ENCODE measurements at regions of chr11 and their contacts with region 1.

Region 1: GRCh38 chr11:47176328-47177228 is at the start of gene ARFGAP2:
- DNase-seq: peak; percentile 92 to 98 (median 96)
- ATAC-seq: peak; percentile 94
- H3K4me3 ChIP-seq: peak within 1 kb of the TSS; percentile 97
- H3K4me3 Mint-ChIP-seq: peak within 1 kb of the TSS; percentile 92 to 99 (median 98)
- H3K27ac ChIP-seq: peak within 1 kb of the TSS; percentile 97
- H3K27ac Mint-ChIP-seq: peak within 1 kb of the TSS; percentile 97 to 100 (median 99)
- H3K4me1 ChIP-seq: peaks cover 19 to 31% of the 10 kb centered on the region in 2 donors
- H3K4me1 Mint-ChIP-seq: peaks cover 19 to 60% (median 45%) of the 10 kb centered on the region in 7 donors
- H3K27me3 ChIP-seq: no peaks in the 10 kb centered on the region
- H3K27me3 Mint-ChIP-seq: no peaks in the 10 kb centered on the region
- total RNA-seq, gene ARFGAP2: 107 to 220 (median 155) TPM

Region 2: DNA sequence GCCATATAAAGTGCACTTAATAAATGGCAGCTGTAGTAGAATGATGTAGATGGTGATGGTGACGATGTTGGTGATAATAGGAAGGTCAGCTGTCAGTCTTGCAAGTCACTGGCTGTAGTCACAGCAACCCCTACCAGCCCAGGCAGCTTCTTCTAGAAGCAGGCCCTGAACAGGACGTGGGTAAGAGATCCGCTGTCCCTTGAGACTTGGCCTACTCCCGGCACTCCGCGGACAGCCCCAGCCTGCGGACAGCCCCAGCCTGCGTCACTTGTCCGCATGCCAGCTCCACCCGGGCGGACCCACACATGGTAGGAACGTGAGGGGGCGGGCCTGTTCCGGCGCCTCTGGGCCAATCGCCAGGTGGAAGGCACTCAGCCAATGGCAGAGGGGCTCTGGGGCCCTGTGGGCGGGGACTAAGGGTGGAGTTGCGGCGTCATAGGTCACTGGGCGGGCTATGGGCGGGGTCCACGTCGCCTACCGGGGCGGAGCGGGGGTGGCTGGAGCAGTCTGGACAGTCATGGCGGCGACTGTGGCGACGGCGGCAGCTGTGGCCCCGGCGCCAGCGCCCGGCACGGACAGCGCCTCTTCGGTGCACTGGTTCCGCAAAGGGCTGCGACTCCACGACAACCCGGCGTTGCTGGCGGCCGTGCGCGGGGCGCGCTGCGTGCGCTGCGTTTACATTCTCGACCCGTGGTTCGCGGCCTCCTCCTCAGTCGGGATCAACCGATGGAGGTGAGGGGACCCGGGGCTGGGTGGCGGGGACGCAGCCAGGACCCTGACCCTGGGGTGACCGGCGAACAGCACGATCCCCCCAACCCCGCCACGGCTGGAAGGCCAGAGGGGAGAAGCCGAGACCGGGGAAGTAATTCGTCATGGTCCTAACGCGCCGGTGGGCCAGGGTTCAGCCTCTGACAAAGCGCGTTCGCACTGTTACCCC is 1329.3 kb before region 1 on chr11 and contains the start of gene CRY2:
- CTCF ChIA-PET with region 1: no interaction called
- POLR2A ChIA-PET with region 1: no interaction called
- intact Hi-C with region 1: loop called in 1 of 2 experiments (anchors 2 kb)
- DNase-seq: peak; percentile 94 to 98 (median 97)
- ATAC-seq: peak; percentile 90
- H3K4me3 ChIP-seq: peak within 1 kb of the TSS; percentile 85
- H3K4me3 Mint-ChIP-seq: peak within 1 kb of the TSS; percentile 78 to 96 (median 90)
- H3K27ac ChIP-seq: peak within 1 kb of the TSS; percentile 91
- H3K27ac Mint-ChIP-seq: peak within 1 kb of the TSS; percentile 89 to 99 (median 96)
- H3K4me1 ChIP-seq: peaks cover 21 to 34% of the 10 kb centered on the region in 2 donors
- H3K4me1 Mint-ChIP-seq: peaks cover 40 to 68% (median 54%) of the 10 kb centered on the region in 7 donors
- H3K27me3 ChIP-seq: no peaks in the 10 kb centered on the region
- H3K27me3 Mint-ChIP-seq: peaks cover 0 to 20% (median 0%) of the 10 kb centered on the region in 5 donors
- total RNA-seq, gene CRY2: 31.1 to 202 (median 66.9) TPM

Region 3: DNA sequence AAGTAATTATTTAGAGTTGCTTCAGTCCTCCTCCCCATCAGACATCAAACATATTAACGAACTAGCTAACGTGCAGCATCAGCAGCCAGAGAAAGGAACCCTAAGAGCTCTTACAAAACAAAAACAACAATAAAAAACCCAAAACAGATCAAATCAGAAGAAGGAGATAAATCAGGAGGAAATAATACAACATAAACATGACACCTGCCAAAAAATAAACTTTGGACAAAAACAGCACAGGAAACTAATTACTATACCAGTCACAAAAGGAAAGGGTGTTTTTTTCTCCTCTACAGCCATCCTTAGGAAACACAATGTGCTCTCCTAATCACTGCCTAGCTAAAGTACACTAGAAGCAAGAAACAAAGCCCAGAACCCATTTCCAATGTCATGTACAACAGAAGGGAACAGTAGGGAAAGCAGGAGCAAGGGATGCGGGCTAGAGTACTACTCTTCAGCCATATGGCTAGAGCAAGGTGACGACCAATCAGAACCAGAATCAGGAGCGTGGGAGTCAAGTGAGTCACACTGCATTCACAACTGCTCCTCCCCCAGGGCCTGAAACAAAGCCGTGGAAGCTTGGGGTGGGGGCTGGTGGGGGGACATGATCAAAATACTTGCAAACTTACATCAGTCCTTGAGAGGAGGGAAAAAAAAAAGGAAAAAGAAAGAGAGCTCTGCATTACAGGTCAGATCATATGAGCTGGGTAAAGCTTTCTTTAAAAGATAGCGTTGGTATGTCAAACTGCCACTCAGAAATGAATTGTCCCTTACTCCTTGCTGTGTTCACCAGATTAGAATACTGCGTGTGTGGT is 1193.7 kb before region 1 on chr11:
- CTCF ChIA-PET with region 1: no interaction called
- POLR2A ChIA-PET with region 1: no interaction called
- intact Hi-C with region 1: no loop called
- DNase-seq: no peak
- ATAC-seq: no peak
- H3K4me3 ChIP-seq: no peak overlapping the region
- H3K4me3 Mint-ChIP-seq: peak overlapping the region in 1 of 10 donors; percentile 3
- H3K27ac ChIP-seq: no peak overlapping the region
- H3K27ac Mint-ChIP-seq: peak overlapping the region in 3 of 9 donors; percentile 5 to 86 (median 41)
- H3K4me1 ChIP-seq: no peaks in the 10 kb centered on the region
- H3K4me1 Mint-ChIP-seq: peaks cover 15 to 44% (median 25%) of the 10 kb centered on the region in 7 donors
- H3K27me3 ChIP-seq: no peaks in the 10 kb centered on the region
- H3K27me3 Mint-ChIP-seq: no peaks in the 10 kb centered on the region

Region 4: DNA sequence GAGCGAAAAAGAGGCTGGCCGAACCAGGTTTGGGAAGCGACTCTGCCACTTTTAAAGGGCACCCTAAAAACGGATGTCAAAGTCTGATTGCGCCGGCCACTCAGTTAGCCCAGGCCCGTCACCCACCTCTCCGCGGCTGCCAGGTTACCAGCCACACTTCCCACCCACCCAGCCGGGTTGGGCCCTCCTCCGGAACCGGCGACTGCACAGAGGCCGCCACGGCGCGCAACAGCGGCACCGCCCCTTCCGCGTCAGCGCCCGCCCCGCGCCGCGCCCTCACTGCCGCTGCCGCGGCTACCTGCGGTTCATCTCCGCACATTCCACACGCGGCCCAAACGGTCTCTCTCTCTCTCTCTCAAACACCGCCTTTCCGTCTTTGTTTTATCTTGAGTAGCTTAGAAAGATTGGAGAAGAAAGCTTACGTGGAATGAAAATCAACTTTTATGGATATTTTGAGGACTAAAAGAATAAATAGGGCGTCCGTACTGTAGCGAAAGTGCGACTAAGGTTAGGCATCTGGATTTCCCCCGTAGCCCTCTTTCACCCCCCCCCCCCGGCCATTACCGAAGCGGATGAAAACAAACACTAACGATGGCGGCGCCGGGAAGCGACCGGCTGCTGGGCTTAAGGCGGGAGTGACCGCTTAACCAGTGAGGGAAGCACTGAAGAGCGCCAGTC is 559.4 kb before region 1 on chr11 and contains the starts of genes ATG13 and HARBI1:
- CTCF ChIA-PET with region 1: no interaction called
- POLR2A ChIA-PET with region 1: no interaction called
- intact Hi-C with region 1: loop called in 1 of 2 experiments (anchors 1 kb)
- DNase-seq: peak; percentile 89 to 95 (median 94)
- ATAC-seq: peak; percentile 96
- H3K4me3 ChIP-seq: peak within 1 kb of the TSS; percentile 99
- H3K4me3 Mint-ChIP-seq: peak within 1 kb of the TSS; percentile 93 to 99 (median 96)
- H3K27ac ChIP-seq: peak within 1 kb of the TSS; percentile 100
- H3K27ac Mint-ChIP-seq: peak within 1 kb of the TSS; percentile 95 to 100 (median 99)
- H3K4me1 ChIP-seq: peaks cover 17 to 27% of the 10 kb centered on the region in 2 donors
- H3K4me1 Mint-ChIP-seq: peaks cover 26 to 53% (median 42%) of the 10 kb centered on the region in 7 donors
- H3K27me3 ChIP-seq: no peaks in the 10 kb centered on the region
- H3K27me3 Mint-ChIP-seq: no peaks in the 10 kb centered on the region
- total RNA-seq, gene ATG13: 70.0 to 114 (median 96.8) TPM
- total RNA-seq, gene HARBI1: 5.8 to 18.1 (median 8.0) TPM

Region 5: GRCh38 chr11:47071791-47072261 is 104.8 kb before region 1 on chr11:
- CTCF ChIA-PET with region 1: no interaction called
- POLR2A ChIA-PET with region 1: no interaction called
- intact Hi-C with region 1: no loop called
- DNase-seq: no peak
- ATAC-seq: no peak
- H3K4me3 ChIP-seq: no peak overlapping the region
- H3K4me3 Mint-ChIP-seq: no peak overlapping the region
- H3K27ac ChIP-seq: no peak overlapping the region
- H3K27ac Mint-ChIP-seq: no peak overlapping the region
- H3K4me1 ChIP-seq: no peaks in the 10 kb centered on the region
- H3K4me1 Mint-ChIP-seq: no peaks in the 10 kb centered on the region
- H3K27me3 ChIP-seq: no peaks in the 10 kb centered on the region
- H3K27me3 Mint-ChIP-seq: peaks cover 0 to 3% (median 0%) of the 10 kb centered on the region in 5 donors

Region 6: GRCh38 chr11:47152953-47153950 is 23.3 kb before region 1 on chr11:
- CTCF ChIA-PET with region 1: interaction called, 5 read pairs
- POLR2A ChIA-PET with region 1: interaction called, 3 read pairs
- intact Hi-C with region 1: loop called in 1 of 2 experiments (anchors 1 kb)
- DNase-seq: peak; percentile 34 to 64 (median 52)
- ATAC-seq: peak; percentile 80
- H3K4me3 ChIP-seq: peak overlapping the region; percentile 10
- H3K4me3 Mint-ChIP-seq: peak overlapping the region in 9 of 10 donors; percentile 60 to 84 (median 77)
- H3K27ac ChIP-seq: peak overlapping the region; percentile 21
- H3K27ac Mint-ChIP-seq: peak overlapping the region in 8 of 9 donors; percentile 81 to 97 (median 90)
- H3K4me1 ChIP-seq: peaks cover 25 to 40% of the 10 kb centered on the region in 2 donors
- H3K4me1 Mint-ChIP-seq: peaks cover 23 to 50% (median 36%) of the 10 kb centered on the region in 7 donors
- H3K27me3 ChIP-seq: no peaks in the 10 kb centered on the region
- H3K27me3 Mint-ChIP-seq: no peaks in the 10 kb centered on the region

Region 7: GRCh38 chr11:47276923-47277322 is 100.3 kb after region 1 on chr11:
- CTCF ChIA-PET with region 1: no interaction called
- POLR2A ChIA-PET with region 1: no interaction called
- intact Hi-C with region 1: no loop called
- DNase-seq: no peak
- ATAC-seq: no peak
- H3K4me3 ChIP-seq: no peak overlapping the region
- H3K4me3 Mint-ChIP-seq: no peak overlapping the region
- H3K27ac ChIP-seq: no peak overlapping the region
- H3K27ac Mint-ChIP-seq: peak overlapping the region in 2 of 9 donors; percentile 43 to 62
- H3K4me1 ChIP-seq: peaks cover 8 to 12% of the 10 kb centered on the region in 2 donors
- H3K4me1 Mint-ChIP-seq: peaks cover 11 to 31% (median 24%) of the 10 kb centered on the region in 7 donors
- H3K27me3 ChIP-seq: no peaks in the 10 kb centered on the region
- H3K27me3 Mint-ChIP-seq: no peaks in the 10 kb centered on the region

Region 8: GRCh38 chr11:47348859-47349258 is 172.3 kb after region 1 on chr11:
- CTCF ChIA-PET with region 1: no interaction called
- POLR2A ChIA-PET with region 1: no interaction called
- intact Hi-C with region 1: loop called (anchors 2 to 5 kb)
- DNase-seq: peak in 1 of 9 donors; percentile 9
- ATAC-seq: no peak
- H3K4me3 ChIP-seq: no peak overlapping the region
- H3K4me3 Mint-ChIP-seq: no peak overlapping the region
- H3K27ac ChIP-seq: no peak overlapping the region
- H3K27ac Mint-ChIP-seq: no peak overlapping the region
- H3K4me1 ChIP-seq: no peaks in the 10 kb centered on the region
- H3K4me1 Mint-ChIP-seq: peaks cover 0 to 3% (median 0%) of the 10 kb centered on the region in 7 donors
- H3K27me3 ChIP-seq: no peaks in the 10 kb centered on the region
- H3K27me3 Mint-ChIP-seq: no peaks in the 10 kb centered on the region

Region 9: DNA sequence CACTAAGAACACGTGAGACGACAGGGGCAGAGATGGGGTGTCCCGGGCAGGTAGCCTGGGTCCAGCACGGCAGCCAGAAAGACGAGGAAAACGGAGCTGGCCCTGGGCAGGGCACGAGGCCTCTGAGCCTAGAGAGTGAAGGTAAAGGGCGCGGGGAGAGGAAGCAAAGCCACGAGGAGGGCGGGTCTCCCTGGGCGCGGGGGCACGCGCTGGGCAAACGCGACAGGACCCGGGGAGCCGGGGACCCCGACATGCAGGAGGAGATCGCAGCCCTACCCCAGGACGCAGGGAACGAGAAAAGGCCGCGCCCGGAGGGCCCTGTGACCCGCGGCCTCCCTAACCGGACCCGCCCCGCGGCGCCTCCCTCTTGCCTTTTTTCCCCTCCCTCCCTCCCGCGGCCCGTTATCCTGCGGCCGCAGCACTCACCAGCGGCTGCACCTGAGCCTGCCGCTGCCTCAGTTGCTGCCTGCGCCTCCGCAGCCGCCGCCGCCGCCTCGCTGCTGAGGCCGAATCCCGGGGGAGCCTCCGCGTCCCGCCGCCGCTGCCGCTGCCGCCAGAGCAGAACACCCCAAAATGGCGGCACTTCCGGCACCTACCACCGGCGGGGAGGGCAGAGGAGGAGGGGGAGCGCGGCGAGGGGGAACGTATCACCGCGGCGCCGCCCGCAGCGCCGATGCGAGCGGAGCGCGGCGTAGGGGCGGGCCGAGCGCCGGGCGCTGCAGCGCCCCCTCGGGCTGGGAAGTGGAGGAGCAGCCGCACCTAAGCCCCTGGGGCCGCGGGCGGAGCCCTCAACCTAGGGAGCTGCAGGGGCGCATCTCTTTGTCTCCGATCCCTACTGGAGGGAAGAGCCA is 376.2 kb after region 1 on chr11 and contains the start of gene CELF1:
- CTCF ChIA-PET with region 1: no interaction called
- POLR2A ChIA-PET with region 1: no interaction called
- intact Hi-C with region 1: loop called (anchors 2 to 5 kb)
- DNase-seq: peak; percentile 88 to 95 (median 92)
- ATAC-seq: peak; percentile 99
- H3K4me3 ChIP-seq: peak within 1 kb of the TSS; percentile 87
- H3K4me3 Mint-ChIP-seq: peak within 1 kb of the TSS; percentile 93 to 100 (median 96)
- H3K27ac ChIP-seq: peak within 1 kb of the TSS; percentile 89
- H3K27ac Mint-ChIP-seq: peak within 1 kb of the TSS; percentile 86 to 97 (median 95)
- H3K4me1 ChIP-seq: peaks cover 27 to 34% of the 10 kb centered on the region in 2 donors
- H3K4me1 Mint-ChIP-seq: peaks cover 36 to 57% (median 42%) of the 10 kb centered on the region in 7 donors
- H3K27me3 ChIP-seq: no peaks in the 10 kb centered on the region
- H3K27me3 Mint-ChIP-seq: no peaks in the 10 kb centered on the region
- total RNA-seq, gene CELF1: 107 to 148 (median 129) TPM

Region 10: GRCh38 chr11:47847892-47848635 is 671.5 kb after region 1 on chr11 and contains the start of gene NUP160:
- CTCF ChIA-PET with region 1: no interaction called
- POLR2A ChIA-PET with region 1: no interaction called
- intact Hi-C with region 1: loop called in 1 of 2 experiments (anchors 5 kb)
- DNase-seq: peak; percentile 78 to 92 (median 85)
- ATAC-seq: peak; percentile 92
- H3K4me3 ChIP-seq: peak within 1 kb of the TSS; percentile 88
- H3K4me3 Mint-ChIP-seq: peak within 1 kb of the TSS; percentile 88 to 100 (median 98)
- H3K27ac ChIP-seq: peak within 1 kb of the TSS; percentile 97
- H3K27ac Mint-ChIP-seq: peak within 1 kb of the TSS; percentile 72 to 100 (median 98)
- H3K4me1 ChIP-seq: peaks cover 12 to 66% of the 10 kb centered on the region in 2 donors
- H3K4me1 Mint-ChIP-seq: peaks cover 38 to 71% (median 62%) of the 10 kb centered on the region in 7 donors
- H3K27me3 ChIP-seq: no peaks in the 10 kb centered on the region
- H3K27me3 Mint-ChIP-seq: peaks cover 0 to 2% (median 0%) of the 10 kb centered on the region in 5 donors
- total RNA-seq, gene NUP160: 53.9 to 68.0 (median 65.5) TPM